Activated naive CD4-positive, alpha-beta T cell treated with anti-CD3 and anti-CD28 coated beads for 36 hours (primary cell): ENCODE measurements at regions of chr10 and their contacts with region 1.

Region 1: DNA sequence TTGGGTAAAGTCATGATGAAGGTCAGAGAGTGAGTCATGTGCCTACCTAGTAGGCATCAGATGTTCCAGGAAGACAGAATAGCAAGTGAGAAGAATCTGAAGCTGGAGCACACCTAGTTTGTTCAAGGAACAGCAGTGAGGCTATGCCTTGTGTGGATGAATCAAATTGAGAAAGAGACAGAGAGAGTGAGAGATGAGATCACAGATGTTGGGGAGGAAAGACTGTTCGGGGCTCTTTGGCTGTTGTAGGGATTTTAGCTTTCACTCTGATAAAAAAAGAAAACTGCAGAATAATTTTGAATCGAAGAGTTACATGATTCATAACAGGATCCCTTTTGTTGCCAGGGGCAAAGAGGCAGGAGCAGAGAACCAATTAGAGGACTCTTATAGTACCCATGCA is 6.3 kb downstream of the LIPF start:
- DNase-seq: peak; percentile 44
- H3K4me3 Mint-ChIP-seq: no peak overlapping the region
- H3K27ac Mint-ChIP-seq: peak overlapping the region; percentile 33
- H3K4me1 Mint-ChIP-seq: peaks cover 24% of the 10 kb centered on the region
- H3K27me3 Mint-ChIP-seq: peaks cover 7% of the 10 kb centered on the region

Region 2: DNA sequence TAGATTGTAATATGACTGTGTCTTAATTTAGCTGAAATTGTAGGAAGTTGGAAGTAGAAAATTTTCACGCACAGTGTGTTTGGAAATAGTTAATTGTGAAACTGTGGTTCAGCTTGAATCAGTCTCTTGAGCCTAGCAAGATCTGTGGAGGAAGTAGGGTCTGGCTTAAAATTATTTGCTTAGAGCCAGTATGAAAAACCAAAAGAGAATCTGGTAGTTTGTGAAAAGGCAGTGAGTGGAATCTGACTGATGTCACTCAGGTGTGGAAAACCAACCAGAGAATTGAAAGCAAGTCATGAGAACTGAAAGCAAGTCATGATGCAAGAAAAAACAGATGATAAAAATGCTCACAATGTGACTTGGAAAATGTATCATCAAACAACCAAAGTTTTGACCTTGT is 72.4 kb before region 1 on chr10:
- CTCF ChIA-PET with region 1: no interaction called
- intact Hi-C with region 1: no loop called
- DNase-seq: no peak
- H3K4me3 Mint-ChIP-seq: no peak overlapping the region
- H3K27ac Mint-ChIP-seq: no peak overlapping the region
- H3K4me1 Mint-ChIP-seq: peaks cover 8% of the 10 kb centered on the region
- H3K27me3 Mint-ChIP-seq: no peaks in the 10 kb centered on the region

Region 3: GRCh38 chr10:88616251-88616977 is 54.1 kb before region 1 on chr10:
- CTCF ChIA-PET with region 1: no interaction called
- intact Hi-C with region 1: no loop called
- DNase-seq: no peak
- H3K4me3 Mint-ChIP-seq: no peak overlapping the region
- H3K27ac Mint-ChIP-seq: no peak overlapping the region
- H3K4me1 Mint-ChIP-seq: no peaks in the 10 kb centered on the region
- H3K27me3 Mint-ChIP-seq: no peaks in the 10 kb centered on the region

Region 4: GRCh38 chr10:88642978-88643377 is 27.5 kb before region 1 on chr10:
- CTCF ChIA-PET with region 1: no interaction called
- intact Hi-C with region 1: loop called (anchors 1 kb)
- DNase-seq: no peak
- H3K4me3 Mint-ChIP-seq: no peak overlapping the region
- H3K27ac Mint-ChIP-seq: no peak overlapping the region
- H3K4me1 Mint-ChIP-seq: no peaks in the 10 kb centered on the region
- H3K27me3 Mint-ChIP-seq: peaks cover 9% of the 10 kb centered on the region

Region 5: GRCh38 chr10:88707429-88708285 is 37.2 kb after region 1 on chr10:
- CTCF ChIA-PET with region 1: no interaction called
- intact Hi-C with region 1: loop called (anchors 2 kb)
- DNase-seq: peak; percentile 37
- H3K4me3 Mint-ChIP-seq: no peak overlapping the region
- H3K27ac Mint-ChIP-seq: no peak overlapping the region
- H3K4me1 Mint-ChIP-seq: peaks cover 18% of the 10 kb centered on the region
- H3K27me3 Mint-ChIP-seq: peaks cover 3% of the 10 kb centered on the region

Region 6: DNA sequence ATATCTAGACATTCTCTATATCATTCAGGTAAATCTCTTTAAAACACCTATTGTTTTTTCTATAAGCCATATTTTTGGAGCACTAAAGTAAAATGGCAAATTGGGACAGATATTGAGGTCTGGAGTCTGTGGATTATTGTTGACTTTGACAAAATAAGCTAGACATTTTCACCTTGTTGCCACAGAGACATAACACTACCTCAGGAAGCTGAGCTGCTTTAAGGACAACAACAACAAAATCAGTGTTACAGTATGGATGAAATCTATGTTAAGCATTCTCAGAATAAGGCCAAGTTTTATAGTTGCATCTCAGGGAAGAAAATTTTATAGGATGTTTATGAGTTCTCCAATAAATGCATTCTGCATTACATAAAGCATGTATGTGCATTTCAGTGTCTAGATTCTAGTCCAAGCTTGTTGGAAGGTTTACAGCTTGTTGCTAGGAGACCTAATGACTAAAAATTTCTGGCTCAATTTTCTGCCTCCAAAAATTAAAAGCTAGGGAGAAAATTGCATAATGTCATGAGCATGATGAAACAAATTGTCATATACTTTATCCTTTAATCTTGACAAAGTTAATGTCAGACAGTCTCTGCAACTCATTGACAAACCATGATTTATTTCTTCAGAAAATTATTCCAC is 150.4 kb after region 1 on chr10:
- CTCF ChIA-PET with region 1: no interaction called
- intact Hi-C with region 1: loop called (anchors 1 kb)
- DNase-seq: no peak
- H3K4me3 Mint-ChIP-seq: no peak overlapping the region
- H3K27ac Mint-ChIP-seq: no peak overlapping the region
- H3K4me1 Mint-ChIP-seq: peaks cover 27% of the 10 kb centered on the region
- H3K27me3 Mint-ChIP-seq: no peaks in the 10 kb centered on the region

Region 7: DNA sequence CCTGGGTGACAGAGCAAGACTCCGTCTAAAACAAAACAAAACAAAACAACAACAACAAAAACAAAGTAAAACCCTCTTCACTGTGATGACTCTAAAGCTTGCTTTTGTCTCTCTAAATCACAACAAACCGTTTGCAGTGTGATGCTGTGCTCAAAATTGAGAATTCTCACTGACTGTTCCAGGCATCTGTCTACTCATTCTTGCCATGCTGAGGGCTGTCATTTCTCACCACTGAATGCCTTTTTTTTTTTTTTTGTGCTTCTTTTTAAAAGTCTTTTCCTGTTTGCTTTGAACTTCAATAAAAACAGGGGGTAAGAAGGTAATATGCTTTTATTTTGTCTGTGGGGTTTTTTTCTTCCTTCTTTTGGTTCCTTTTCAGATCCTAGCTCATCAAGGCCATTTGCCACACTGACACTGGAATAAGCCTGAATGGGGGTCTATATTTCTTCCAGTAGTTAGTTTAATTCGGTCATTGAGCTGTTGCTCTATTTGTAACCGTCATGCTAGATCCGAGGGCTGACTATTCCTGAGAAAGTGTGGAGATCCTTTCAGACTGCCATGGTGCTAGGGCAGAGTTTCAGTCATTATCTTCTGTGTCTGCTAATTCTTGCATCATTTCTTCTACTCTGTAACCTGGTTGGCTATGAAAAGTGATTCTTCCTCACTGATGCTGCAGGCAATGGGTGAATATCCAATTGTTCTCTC is 330.7 kb after region 1 on chr10:
- CTCF ChIA-PET with region 1: no interaction called
- intact Hi-C with region 1: loop called (anchors 5 kb)
- DNase-seq: peak; percentile 73
- H3K4me3 Mint-ChIP-seq: peak overlapping the region; percentile 53
- H3K27ac Mint-ChIP-seq: peak overlapping the region; percentile 83
- H3K4me1 Mint-ChIP-seq: peaks cover 54% of the 10 kb centered on the region
- H3K27me3 Mint-ChIP-seq: no peaks in the 10 kb centered on the region